ENCODE measurements at regions of chr10 and their contacts with region 1.

Region 1: GRCh38 chr10:22682237-22683139 is 31.9 kb downstream of the PIP4K2A start:
- DNase-seq: peak; percentile 89
- H3K4me3 Mint-ChIP-seq: peak overlapping the region; percentile 78
- H3K27ac Mint-ChIP-seq: peak overlapping the region; percentile 92
- H3K4me1 Mint-ChIP-seq: peaks cover 76% of the 10 kb centered on the region
- H3K27me3 Mint-ChIP-seq: no peaks in the 10 kb centered on the region

Region 2: GRCh38 chr10:20839141-20839540 is 1843.3 kb before region 1 on chr10:
- intact Hi-C with region 1: no loop called
- DNase-seq: no peak
- H3K4me3 Mint-ChIP-seq: no peak overlapping the region
- H3K27ac Mint-ChIP-seq: no peak overlapping the region
- H3K4me1 Mint-ChIP-seq: no peaks in the 10 kb centered on the region
- H3K27me3 Mint-ChIP-seq: no peaks in the 10 kb centered on the region

Region 3: DNA sequence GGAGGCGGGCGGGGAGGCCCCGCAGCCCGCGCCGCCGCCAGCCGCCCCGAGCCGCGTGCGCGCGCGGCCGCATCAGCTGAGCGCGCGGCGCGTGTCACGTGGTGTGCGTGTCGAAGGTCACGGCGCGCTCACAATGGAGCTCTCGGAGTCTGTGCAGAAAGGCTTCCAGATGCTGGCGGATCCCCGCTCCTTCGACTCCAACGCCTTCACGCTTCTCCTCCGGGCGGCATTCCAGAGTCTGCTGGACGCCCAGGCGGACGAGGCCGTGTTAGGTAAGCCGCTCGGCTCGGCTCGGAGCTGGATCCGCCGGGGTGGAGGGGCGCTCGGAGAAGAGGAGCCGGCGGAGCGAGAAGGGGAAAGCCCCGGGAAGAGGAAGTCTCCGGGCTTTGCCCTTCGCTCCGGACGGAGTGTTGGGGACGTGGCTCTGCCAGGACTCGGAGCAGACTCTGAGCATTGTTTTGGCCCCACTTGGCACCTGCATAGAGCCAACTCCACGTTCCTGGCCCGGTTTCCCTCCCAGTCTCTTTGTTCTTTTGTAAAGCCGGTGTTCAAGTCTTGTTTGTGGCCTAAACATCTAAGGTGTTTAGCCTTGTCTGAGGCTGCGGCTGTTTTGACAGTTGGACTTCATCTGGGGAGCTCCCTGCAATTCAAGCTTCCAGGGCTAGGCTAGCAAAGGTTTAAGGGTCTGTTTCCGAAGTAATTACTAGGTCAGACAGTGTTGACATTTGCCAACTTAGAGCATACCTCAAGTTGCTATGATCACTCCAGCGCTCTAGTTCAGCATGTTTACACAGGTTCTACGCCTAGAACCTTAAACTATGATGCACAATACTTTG is 366.0 kb before region 1 on chr10 and contains the start of gene COMMD3:
- intact Hi-C with region 1: loop called (anchors 5 kb)
- DNase-seq: peak; percentile 95
- H3K4me3 Mint-ChIP-seq: peak within 1 kb of the TSS; percentile 87
- H3K27ac Mint-ChIP-seq: peak within 1 kb of the TSS; percentile 94
- H3K4me1 Mint-ChIP-seq: peaks cover 29% of the 10 kb centered on the region
- H3K27me3 Mint-ChIP-seq: no peaks in the 10 kb centered on the region
- total RNA-seq, gene COMMD3: 76.7 and 79.7 TPM in 2 replicates

Region 4: DNA sequence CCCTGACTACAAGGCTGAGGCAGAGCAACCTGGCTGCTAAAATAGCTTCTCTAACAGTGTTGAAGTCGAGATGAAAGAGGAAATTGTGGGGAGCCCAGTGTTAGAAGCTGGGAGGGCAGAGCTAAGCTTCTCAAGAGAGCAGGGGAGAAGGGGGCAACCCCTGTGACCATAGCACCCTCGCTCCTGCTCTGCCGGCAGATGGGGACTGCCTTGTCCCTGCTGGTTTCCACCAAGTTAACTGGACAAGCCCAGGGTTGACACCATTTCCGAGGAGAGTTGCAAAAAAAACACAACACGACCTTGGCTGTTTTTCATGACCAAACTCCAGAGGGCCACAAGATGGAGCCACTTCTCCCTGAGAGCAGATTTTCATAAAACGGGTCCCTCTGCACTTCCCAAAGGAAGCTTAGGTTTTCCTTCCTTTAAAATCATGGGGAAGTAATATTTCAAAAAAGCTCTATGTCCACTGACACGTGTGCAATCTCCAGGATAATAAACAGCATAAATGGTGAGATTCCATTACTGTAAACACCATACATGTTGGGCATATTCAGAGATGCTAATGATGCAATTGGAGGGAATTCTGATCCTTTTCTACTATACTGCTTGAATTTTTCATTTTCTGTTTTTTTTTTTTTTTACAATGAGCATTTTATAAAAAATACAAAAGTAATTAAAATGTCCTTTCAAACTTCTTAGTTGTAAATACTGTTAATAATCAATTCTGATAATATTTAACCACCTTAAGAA is 108.5 kb before region 1 on chr10:
- intact Hi-C with region 1: loop called (anchors 1 kb)
- DNase-seq: no peak
- H3K4me3 Mint-ChIP-seq: no peak overlapping the region
- H3K27ac Mint-ChIP-seq: no peak overlapping the region
- H3K4me1 Mint-ChIP-seq: peaks cover 36% of the 10 kb centered on the region
- H3K27me3 Mint-ChIP-seq: no peaks in the 10 kb centered on the region

Region 5: DNA sequence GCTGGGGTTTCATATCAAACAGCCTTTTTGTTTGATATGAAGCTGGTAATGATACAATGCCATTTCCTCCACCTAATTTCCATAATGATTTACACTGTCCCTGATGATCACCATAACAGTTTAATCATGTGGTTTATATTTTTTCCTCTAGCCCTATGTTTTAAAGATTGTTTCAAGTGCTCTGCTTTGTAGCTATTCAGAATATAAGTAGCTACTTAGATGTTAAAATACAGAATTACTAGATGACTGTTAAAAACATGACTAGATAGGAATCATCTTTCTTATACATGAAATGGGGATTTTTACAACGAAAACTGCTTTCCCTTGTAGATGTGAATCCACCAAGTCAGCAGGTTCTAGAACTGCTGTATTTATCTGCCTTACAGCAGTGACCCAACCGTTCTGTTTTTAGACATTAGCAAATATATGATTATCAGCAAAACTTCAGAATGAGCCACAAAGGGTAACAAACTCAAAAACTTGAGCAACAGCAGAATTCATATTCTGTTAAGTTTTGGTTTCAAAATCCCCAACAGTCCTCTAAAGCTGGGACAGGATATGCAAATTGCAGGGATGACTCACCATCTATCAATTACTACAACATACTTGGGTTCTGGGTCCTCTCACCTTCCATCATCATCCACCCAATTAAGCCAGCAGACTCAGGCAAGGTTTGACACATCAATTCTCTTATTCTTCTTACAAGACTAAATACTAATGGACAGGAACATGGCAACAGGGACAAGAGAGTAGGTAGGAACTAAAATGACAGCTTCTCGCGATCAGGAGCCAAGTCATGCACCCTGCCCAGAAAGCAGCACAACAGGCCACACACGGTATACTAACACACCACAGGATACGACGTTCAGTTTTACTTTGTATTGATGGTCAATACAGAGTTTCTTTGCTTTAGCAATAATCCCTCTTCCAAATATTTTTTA is 52.0 kb before region 1 on chr10:
- intact Hi-C with region 1: loop called (anchors 1 kb)
- DNase-seq: peak; percentile 84
- H3K4me3 Mint-ChIP-seq: peak overlapping the region; percentile 76
- H3K27ac Mint-ChIP-seq: peak overlapping the region; percentile 95
- H3K4me1 Mint-ChIP-seq: peaks cover 79% of the 10 kb centered on the region
- H3K27me3 Mint-ChIP-seq: no peaks in the 10 kb centered on the region

Region 6: DNA sequence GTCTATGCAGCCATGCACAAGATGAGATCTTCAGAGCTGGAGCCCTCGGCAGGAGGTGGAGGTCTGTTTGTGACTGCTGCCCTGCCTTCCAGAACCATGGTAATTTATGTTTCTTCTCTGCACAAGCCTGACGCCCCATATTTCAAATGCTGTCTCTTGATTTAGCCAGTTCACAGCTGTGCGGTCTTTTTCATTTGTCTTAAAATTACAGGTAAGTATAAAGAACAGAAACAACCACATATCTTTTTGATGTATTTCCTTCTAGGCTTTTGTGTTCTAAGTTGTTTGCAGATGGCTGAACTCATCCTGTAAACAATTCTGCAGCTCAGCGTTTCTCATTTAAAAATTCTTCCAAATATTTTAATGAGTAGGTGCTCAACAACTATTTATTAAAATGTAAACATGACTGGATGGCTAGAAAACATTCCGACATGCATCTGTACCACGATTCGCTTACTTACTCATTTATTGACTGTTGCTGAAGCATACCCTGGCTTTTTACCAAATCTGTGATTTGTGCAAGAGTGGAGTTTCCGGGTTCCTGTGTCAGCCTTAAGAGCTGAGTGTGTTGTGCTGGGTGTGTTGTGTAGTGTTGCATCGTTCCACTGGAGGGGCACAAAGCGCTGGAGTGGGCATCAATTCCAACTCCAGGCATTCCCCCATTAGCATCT is 27.0 kb before region 1 on chr10:
- intact Hi-C with region 1: loop called (anchors 1 kb)
- DNase-seq: peak; percentile 80
- H3K4me3 Mint-ChIP-seq: peak overlapping the region; percentile 64
- H3K27ac Mint-ChIP-seq: peak overlapping the region; percentile 90
- H3K4me1 Mint-ChIP-seq: peaks cover 88% of the 10 kb centered on the region
- H3K27me3 Mint-ChIP-seq: no peaks in the 10 kb centered on the region

Region 7: GRCh38 chr10:22693371-22693784 is 10.9 kb after region 1 on chr10:
- intact Hi-C with region 1: loop called (anchors 1 kb)
- DNase-seq: no peak
- H3K4me3 Mint-ChIP-seq: peak overlapping the region; percentile 52
- H3K27ac Mint-ChIP-seq: peak overlapping the region; percentile 89
- H3K4me1 Mint-ChIP-seq: peaks cover 44% of the 10 kb centered on the region
- H3K27me3 Mint-ChIP-seq: no peaks in the 10 kb centered on the region

Region 8: GRCh38 chr10:22727663-22728062 is 45.2 kb after region 1 on chr10:
- intact Hi-C with region 1: no loop called
- DNase-seq: no peak
- H3K4me3 Mint-ChIP-seq: no peak overlapping the region
- H3K27ac Mint-ChIP-seq: no peak overlapping the region
- H3K4me1 Mint-ChIP-seq: peaks cover 6% of the 10 kb centered on the region
- H3K27me3 Mint-ChIP-seq: peaks cover 17% of the 10 kb centered on the region

Measured in activated CD4-positive, alpha-beta T cell treated with anti-CD3 and anti-CD28 coated beads, Interleukin-2, amount 10 ng/mL, durations not matched to agents 24 days and 14 days (primary cell).